ENCODE measurements at regions of chr18 and their contacts with region 1.

Region 1: GRCh38 chr18:3245853-3246634 is 1.6 kb upstream of the MYL12A start:
- DNase-seq: peak; percentile 77
- H3K4me3 ChIP-seq: peak overlapping the region; percentile 30 to 56
- H3K27ac ChIP-seq: peak overlapping the region; percentile 94 to 98
- H3K4me1 ChIP-seq: peaks cover 10 to 11% of the 10 kb centered on the region in 2 experiments; a peak in 3 of 4 replicates
- H3K27me3 ChIP-seq: no peaks in the 10 kb centered on the region
- CTCF ChIP-seq: peak; percentile 90
- EP300 ChIP-seq: no peak
- RAD21 ChIP-seq: peak; percentile 98

Region 2: DNA sequence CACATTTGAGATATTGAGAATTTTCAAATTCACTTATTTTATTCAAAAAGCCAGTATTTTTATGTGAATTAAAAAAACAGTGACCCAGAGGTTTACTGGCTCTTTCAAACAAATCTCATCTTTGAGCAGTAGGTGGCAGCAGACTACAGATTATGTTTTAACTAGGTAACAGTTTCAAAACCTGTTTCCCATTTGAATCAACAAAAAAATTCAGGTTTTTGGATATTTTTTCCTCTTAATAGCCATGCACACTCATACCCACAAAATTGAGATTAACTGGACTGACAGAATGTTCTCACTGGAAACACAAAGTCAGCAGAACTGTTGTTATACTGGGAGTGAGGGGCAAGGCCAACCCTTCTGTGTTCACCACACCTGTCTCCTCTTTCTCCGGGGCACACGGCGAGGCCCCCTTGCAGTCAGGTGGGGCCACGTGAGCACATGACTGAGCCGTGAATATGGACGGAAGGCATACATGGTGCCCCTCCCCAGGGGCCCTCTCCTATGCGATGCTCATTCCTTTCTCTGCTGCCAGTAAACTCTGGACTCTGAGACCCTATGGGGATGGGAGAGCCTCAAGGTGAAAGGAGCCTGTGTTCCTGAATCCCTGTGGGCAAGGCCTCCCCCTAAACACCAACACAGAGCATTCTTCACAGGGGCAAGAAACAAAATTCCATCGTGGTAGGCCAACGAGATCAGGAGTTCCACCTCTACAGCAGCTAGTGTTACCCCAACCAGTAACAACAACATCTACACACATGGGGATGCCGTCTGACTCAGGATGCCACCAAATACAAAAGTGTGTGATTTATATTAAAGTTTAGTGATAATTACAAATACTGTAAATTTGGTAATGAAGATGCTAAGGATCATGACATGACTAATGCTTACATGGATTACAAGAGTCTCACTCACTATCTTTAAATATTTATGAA is 313.5 kb before region 1 on chr18:
- CTCF ChIA-PET with region 1: interaction called, 38 read pairs
- POLR2A ChIA-PET with region 1: no interaction called
- DNase-seq: peak; percentile 64
- H3K4me3 ChIP-seq: no peak overlapping the region; a peak in 1 of 4 replicates
- H3K27ac ChIP-seq: no peak overlapping the region; a peak in 1 of 4 replicates
- H3K4me1 ChIP-seq: no peaks in the 10 kb centered on the region; a peak in 1 of 4 replicates
- H3K27me3 ChIP-seq: no peaks in the 10 kb centered on the region
- CTCF ChIP-seq: peak; percentile 86
- EP300 ChIP-seq: no peak
- RAD21 ChIP-seq: peak; percentile 89

Region 3: DNA sequence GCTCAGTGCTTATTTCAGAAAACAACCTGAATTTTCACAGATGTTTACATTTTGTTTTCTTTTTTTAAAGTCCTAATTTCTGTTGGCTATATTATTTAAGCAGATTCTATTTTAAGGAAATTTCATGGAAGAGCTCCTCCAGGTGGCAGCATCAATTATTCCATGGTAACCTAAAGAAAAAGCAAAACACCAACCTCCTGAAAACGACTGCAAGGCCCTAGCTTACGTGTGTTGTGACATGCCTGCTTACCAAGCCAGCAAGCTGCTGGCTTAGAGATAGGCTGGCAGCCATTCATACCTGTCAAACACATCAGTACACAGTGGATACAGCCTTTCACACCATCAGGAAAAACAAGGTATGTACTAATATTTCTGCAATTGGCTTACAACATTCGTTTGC is 298.0 kb before region 1 on chr18:
- CTCF ChIA-PET with region 1: interaction called, 25 read pairs
- POLR2A ChIA-PET with region 1: no interaction called
- DNase-seq: peak; percentile 19
- H3K4me3 ChIP-seq: no peak overlapping the region
- H3K27ac ChIP-seq: no peak overlapping the region
- H3K4me1 ChIP-seq: no peaks in the 10 kb centered on the region; a peak in 1 of 4 replicates
- H3K27me3 ChIP-seq: no peaks in the 10 kb centered on the region
- CTCF ChIP-seq: peak; percentile 58
- EP300 ChIP-seq: no peak
- RAD21 ChIP-seq: peak; percentile 40

Region 4: DNA sequence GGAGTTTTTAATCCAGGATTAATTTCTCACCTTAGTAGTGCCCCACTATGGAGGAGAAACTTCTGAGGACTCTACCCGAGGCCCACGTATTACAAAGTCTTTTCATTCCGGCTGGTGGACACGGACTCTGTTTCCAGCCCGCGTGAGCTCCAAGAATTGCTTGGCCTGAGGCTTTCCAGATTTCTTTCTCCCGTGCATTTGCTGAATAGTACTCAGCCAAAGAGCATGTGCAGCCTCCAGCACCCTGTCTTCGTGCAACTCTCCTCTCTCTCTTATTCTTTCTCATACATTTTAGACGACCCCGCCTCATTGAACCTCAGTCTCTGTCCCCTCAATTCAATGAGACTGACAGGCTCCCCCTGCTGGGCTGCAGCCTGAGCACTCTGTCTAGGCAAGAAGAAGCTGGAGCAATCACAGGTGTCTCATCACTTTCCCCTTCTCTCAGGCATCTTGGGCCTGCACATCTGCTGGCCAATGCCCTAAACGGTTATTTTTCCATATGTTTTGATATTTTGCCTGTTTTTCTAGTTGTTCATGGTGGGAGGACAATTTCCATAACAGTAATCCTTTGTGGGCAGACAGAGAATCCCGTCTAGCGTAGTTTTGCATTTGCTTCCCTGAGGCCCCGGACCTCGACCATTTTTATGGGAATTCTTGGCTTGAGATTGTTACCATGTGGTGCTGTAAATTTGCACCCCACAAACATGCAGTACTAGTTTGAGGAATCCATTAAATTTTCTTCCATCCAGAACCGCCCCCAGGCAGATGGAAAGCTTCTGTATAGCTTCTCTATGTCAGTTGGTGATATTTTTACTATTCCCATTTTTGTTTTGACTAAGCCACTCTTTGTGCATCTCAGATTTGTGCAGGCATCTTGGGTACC is 183.0 kb before region 1 on chr18:
- CTCF ChIA-PET with region 1: interaction called, 24 read pairs
- POLR2A ChIA-PET with region 1: no interaction called
- DNase-seq: peak; percentile 63
- H3K4me3 ChIP-seq: no peak overlapping the region
- H3K27ac ChIP-seq: no peak overlapping the region
- H3K4me1 ChIP-seq: no peaks in the 10 kb centered on the region; a peak in 1 of 4 replicates
- H3K27me3 ChIP-seq: no peaks in the 10 kb centered on the region
- CTCF ChIP-seq: peak; percentile 75
- EP300 ChIP-seq: no peak
- RAD21 ChIP-seq: peak; percentile 71

Region 5: DNA sequence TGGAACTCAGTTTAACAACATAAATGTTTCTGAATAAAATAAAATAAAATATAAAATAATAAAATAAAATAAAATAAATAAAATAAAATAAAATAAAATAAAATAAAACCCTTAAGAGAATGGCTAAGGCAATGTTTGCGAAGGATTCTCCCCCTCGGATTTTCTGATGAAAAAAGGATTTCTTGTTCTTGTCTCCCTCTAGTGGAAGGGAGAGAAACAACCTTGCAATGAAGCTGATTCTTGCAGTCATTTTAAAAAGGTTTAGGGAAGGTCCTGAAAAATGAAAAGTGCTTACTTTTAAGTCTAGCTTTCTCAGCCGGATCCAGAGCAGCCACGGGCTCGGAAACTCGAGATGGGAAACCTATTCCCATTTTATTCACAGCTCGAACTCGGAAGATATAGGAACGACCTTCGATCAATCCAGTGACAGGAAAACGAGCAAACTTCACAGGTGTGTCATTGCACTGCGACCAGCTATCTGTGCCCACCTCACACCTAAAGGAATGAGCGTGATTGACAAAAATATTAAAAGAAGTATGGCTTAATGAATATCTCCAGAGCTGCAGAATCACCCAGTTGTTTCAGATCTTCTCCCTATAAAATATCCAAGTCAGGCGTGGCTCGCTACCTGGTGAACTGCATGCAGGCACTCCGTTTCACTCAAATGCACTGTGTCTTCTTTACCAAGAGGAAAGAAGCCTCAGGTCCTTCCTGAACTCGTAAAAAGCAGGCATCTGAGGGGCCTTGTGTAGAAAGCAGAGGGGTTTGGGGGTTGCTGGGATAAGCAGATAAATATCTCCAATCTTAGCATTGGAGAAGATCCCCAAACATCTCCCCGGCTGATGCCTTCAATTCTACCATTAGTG is 94.4 kb before region 1 on chr18:
- CTCF ChIA-PET with region 1: interaction called, 27 read pairs
- POLR2A ChIA-PET with region 1: no interaction called
- DNase-seq: peak; percentile 64
- H3K4me3 ChIP-seq: no peak overlapping the region
- H3K27ac ChIP-seq: no peak overlapping the region
- H3K4me1 ChIP-seq: no peaks in the 10 kb centered on the region; a peak in 1 of 4 replicates
- H3K27me3 ChIP-seq: no peaks in the 10 kb centered on the region
- CTCF ChIP-seq: peak; percentile 75
- EP300 ChIP-seq: no peak
- RAD21 ChIP-seq: peak; percentile 74

Region 6: DNA sequence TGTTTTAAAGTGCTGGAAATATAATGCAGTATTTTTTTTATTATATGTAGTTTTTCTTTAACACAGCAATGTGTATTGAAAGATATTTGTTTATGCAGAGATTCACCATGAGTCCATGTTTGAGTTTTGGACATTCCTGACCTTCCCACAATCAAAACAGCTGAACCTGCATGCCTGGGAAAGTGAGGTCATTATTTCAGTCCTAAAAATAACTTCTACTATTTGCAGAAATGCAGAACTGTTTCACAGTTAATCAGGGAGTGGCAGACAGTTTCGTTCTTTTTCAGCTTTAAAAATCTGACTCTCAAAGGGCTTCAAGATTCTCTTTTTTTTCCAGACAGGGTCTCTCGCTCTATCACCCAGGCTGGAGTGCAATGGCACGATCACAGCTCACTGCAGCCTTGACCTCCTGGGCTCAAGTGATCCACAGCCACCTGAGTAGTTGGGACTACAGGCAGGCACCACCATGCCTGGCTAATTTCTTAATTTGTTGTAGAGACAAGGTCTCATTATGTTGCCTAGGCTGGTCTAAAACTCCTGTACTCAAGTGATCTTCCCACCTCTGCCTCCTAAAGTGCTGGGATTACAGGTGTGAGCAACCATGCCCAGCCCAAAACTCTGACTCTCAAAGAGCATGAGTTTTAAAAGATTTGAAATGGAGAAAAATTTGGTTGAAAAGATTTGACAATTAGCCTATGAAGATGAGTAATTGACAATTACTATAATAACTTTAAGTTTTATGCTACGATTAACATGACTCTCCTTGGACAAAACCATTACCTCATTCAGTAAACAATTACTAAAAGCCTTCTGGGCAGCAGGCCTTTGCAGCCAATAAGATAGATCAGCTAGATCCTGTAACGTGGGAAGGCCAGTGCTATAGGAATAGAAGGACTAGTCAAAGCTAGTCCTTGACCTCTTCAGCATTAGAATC is 10.9 kb after region 1 on chr18:
- CTCF ChIA-PET with region 1: interaction called, 11 read pairs
- POLR2A ChIA-PET with region 1: interaction called, 4 read pairs
- DNase-seq: no peak
- H3K4me3 ChIP-seq: no peak overlapping the region
- H3K27ac ChIP-seq: peak overlapping the region in 1 of 2 experiments; percentile 39; a peak in 2 of 4 replicates
- H3K4me1 ChIP-seq: peaks cover 4 to 26% of the 10 kb centered on the region in 2 experiments; a peak in 3 of 4 replicates
- H3K27me3 ChIP-seq: no peaks in the 10 kb centered on the region
- CTCF ChIP-seq: no peak
- EP300 ChIP-seq: no peak
- RAD21 ChIP-seq: no peak

Region 7: DNA sequence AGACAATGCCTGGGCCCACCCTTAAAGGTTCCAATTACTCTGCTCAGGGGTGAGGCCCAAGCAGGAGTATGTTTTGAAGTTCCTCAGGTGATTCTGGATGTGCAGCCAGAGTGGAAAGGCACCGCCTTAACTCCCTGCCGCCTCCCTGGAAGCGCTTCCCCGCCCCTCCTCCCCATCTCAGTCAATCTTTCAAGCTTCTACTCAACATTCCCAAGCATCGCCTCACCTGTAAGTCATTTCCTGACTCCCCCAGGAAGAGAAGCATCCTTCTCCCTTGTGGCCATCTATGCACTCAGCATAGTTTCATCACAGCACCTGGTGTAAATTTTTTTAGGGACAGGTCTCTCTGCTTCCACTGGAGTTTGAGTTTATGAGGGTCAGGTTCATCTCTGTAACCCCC is 83.4 kb after region 1 on chr18:
- CTCF ChIA-PET with region 1: no interaction called
- POLR2A ChIA-PET with region 1: no interaction called
- DNase-seq: no peak
- H3K4me3 ChIP-seq: no peak overlapping the region
- H3K27ac ChIP-seq: no peak overlapping the region
- H3K4me1 ChIP-seq: no peaks in the 10 kb centered on the region; a peak in 1 of 4 replicates
- H3K27me3 ChIP-seq: no peaks in the 10 kb centered on the region
- CTCF ChIP-seq: no peak
- EP300 ChIP-seq: no peak
- RAD21 ChIP-seq: no peak

Region 8: DNA sequence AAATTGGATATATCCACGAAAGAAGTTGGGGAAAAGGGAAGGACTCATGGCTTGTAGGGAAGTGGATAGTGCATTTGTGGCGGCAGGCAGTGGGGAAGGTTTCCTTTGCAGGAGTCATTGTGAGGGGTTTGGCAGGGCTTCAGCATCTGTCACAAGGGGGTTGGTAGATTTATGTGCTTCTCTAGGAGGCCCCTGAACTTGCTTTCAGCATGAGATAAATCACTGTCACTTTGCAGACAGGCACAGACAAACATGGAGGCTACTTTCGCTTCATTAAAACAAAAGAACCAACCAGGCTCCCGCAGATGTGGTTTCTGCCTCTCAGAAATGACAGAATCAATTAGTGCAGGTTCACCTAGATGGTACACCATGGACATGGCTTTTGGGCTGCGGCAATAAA is 544.7 kb after region 1 on chr18:
- CTCF ChIA-PET with region 1: no interaction called
- POLR2A ChIA-PET with region 1: no interaction called
- DNase-seq: no peak
- H3K4me3 ChIP-seq: no peak overlapping the region; a peak in 1 of 4 replicates
- H3K27ac ChIP-seq: peak overlapping the region in 1 of 2 experiments; percentile 13; a peak in 1 of 4 replicates
- H3K4me1 ChIP-seq: peaks cover 0 to 5% of the 10 kb centered on the region in 2 experiments; a peak in 1 of 4 replicates
- H3K27me3 ChIP-seq: no peaks in the 10 kb centered on the region
- CTCF ChIP-seq: no peak
- EP300 ChIP-seq: peak in 1 of 2 experiments; percentile 64; a peak in 1 of 4 replicates
- RAD21 ChIP-seq: no peak

Measured in SK-N-SH (cell line).